Activated CD4-positive, alpha-beta memory T cell treated with anti-CD3 and anti-CD28 coated beads for 36 hours (primary cell): ENCODE measurements at regions of chr5 and their contacts with region 1.

Region 1: GRCh38 chr5:151659001-151659754 is 27.5 kb downstream of the SPARC start:
- DNase-seq: peak; percentile 88
- H3K4me3 Mint-ChIP-seq: no peak overlapping the region
- H3K27ac Mint-ChIP-seq: no peak overlapping the region
- H3K4me1 Mint-ChIP-seq: peaks cover 15% of the 10 kb centered on the region
- H3K27me3 Mint-ChIP-seq: peaks cover 3% of the 10 kb centered on the region

Region 2: DNA sequence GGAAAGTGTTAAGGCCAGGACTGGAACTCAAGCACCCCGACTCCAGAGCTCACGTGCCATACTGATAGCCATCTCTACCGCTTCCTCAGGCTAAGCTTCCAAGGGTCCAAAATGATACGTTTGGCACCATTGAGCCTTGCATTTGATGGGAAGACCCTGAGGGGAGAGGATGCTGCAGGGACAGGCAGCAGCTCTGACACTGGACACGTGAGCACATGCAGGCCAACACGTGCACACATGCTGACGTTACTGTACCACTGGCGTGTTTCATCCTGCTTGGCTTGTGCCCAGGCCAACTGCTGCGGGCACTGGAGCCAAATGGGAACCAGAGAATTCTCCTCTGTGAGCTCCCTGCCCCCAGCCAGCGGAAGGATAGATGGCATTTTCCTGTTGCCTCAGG is 73.2 kb before region 1 on chr5:
- CTCF ChIA-PET with region 1: no interaction called
- POLR2A ChIA-PET with region 1: no interaction called
- intact Hi-C with region 1: no loop called
- DNase-seq: no peak
- H3K4me3 Mint-ChIP-seq: no peak overlapping the region
- H3K27ac Mint-ChIP-seq: no peak overlapping the region
- H3K4me1 Mint-ChIP-seq: no peaks in the 10 kb centered on the region
- H3K27me3 Mint-ChIP-seq: no peaks in the 10 kb centered on the region

Region 3: DNA sequence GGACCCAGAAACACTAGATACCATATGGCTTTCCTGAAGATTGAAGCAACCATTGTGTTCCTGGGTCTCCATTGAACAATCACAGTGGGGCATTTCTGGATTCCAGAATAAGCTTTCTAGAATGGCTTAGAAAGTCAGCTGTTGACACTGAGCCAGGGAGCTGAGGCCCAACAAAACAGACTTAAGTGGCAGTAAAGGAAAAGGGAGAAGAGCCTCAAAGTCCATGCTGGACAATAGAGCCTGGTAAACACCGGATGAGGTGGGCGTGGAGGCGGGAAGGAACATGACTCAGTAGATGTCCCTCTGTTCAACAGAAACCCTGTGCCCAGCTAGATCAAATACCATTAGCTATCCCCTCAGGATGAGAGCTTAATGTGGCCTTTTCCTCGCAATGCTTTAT is 12.8 kb after region 1 on chr5:
- CTCF ChIA-PET with region 1: interaction called, 18 read pairs
- POLR2A ChIA-PET with region 1: no interaction called
- intact Hi-C with region 1: no loop called
- DNase-seq: no peak
- H3K4me3 Mint-ChIP-seq: no peak overlapping the region
- H3K27ac Mint-ChIP-seq: no peak overlapping the region
- H3K4me1 Mint-ChIP-seq: no peaks in the 10 kb centered on the region
- H3K27me3 Mint-ChIP-seq: peaks cover 2% of the 10 kb centered on the region

Region 4: DNA sequence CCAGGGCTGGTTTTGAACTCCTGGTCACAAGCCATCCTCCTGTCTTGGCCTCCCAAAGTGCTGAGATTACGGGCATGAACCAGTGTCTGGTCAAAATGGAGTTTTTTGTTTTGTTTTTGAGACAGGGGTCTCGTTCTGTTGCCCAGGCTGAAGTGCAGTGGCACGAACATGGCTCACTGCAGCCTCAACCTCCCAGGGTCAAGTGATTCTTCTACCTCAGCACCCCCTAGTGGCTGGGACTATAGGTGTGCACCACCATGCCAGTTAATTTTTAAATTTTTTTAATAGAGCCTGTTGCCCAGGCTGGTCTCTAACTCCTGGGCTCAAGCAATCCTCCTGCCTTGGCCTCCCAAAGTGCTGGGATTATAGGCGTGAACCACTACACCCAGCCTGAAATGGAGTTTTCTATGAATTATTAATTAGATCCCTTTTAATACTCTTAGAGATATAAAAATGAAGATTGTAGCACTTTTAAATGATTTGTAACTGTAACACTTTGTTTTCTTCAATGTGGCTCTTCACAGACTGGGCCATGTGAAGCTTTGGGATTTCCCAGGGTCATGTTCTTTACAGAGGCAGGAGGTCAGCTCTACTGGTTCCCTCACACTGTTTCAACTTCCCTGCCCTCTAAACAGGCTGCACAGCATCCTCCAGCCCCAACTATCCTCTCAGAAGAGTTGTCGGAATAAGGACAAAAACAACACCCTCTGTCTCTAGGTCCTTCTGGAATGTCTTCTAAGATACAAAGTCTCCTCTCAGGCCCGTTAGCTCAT is 60.2 kb after region 1 on chr5:
- CTCF ChIA-PET with region 1: interaction called, 24 read pairs
- POLR2A ChIA-PET with region 1: no interaction called
- intact Hi-C with region 1: loop called (anchors 1 kb)
- DNase-seq: peak; percentile 36
- H3K4me3 Mint-ChIP-seq: no peak overlapping the region
- H3K27ac Mint-ChIP-seq: no peak overlapping the region
- H3K4me1 Mint-ChIP-seq: peaks cover 10% of the 10 kb centered on the region
- H3K27me3 Mint-ChIP-seq: no peaks in the 10 kb centered on the region

Region 5: DNA sequence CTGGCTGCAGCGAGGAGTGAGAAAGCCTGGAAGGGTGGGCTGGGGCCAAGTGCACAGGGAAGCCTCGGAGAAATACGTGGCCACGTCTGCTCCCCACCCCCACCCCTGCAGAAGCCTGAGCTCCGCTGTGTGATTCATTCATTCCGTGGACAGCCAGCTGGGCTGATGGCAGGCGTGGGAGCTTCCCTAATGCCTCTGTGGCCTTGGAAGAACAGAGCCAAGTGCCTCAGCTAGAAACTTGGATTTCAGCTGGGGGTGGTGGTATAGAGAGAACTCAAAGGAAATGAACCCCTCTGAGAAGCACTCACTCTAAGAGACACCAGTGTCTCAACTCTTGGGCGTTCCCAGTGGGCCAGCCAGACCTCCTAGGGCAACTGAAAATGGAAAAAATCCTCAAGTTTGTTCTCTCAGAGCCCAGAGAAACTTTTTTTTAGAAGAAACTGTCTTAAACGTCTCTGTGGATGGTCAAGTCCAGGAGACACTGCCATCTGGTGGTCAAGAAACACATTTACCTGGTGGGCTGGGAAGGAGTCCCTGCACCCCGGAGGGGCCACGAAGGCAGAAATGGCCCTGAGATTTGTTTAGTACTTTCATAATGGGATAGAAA is 81.3 kb after region 1 on chr5:
- CTCF ChIA-PET with region 1: interaction called, 156 read pairs
- POLR2A ChIA-PET with region 1: no interaction called
- intact Hi-C with region 1: loop called (anchors 1 kb)
- DNase-seq: peak; percentile 55
- H3K4me3 Mint-ChIP-seq: no peak overlapping the region
- H3K27ac Mint-ChIP-seq: no peak overlapping the region
- H3K4me1 Mint-ChIP-seq: peaks cover 23% of the 10 kb centered on the region
- H3K27me3 Mint-ChIP-seq: no peaks in the 10 kb centered on the region

Region 6: GRCh38 chr5:151758430-151759241 is 99.5 kb after region 1 on chr5 and contains the start of gene ATOX1:
- CTCF ChIA-PET with region 1: interaction called, 12 read pairs
- POLR2A ChIA-PET with region 1: no interaction called
- intact Hi-C with region 1: loop called (anchors 5 kb)
- DNase-seq: peak; percentile 94
- H3K4me3 Mint-ChIP-seq: peak within 1 kb of the TSS; percentile 77
- H3K27ac Mint-ChIP-seq: peak within 1 kb of the TSS; percentile 69
- H3K4me1 Mint-ChIP-seq: peaks cover 32% of the 10 kb centered on the region
- H3K27me3 Mint-ChIP-seq: no peaks in the 10 kb centered on the region
- total RNA-seq, gene ATOX1: 83.1 to 89.9 TPM

Region 7: DNA sequence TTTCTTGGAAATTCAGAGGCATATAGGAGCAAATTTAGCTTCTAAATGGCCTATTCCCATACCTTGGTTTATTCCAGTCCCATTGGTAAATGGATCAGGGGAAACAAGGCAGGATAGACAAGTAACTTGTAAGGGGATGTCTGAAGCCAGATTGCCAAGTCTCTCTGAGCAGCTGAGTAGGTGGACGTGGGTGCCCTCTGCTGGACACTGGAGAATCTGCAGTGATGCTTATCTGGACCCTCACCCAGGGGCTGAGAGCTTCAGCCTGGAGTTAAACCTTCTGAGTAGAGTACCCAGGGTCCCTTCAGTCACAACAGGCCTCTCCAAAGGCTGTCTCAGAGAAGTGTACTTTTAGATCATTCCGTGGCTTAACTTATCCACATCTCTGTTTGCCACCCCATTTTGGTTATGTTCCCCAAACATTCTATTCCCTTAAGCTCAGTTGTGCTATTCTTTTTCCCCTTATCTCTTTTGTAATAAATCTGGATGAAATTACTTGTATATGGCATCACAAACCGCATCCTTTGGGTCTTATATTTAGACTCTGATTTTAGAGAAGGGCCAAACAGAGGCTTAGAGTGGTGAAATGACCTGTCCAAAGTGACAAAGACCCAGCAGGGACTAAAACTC is 483.8 kb after region 1 on chr5:
- CTCF ChIA-PET with region 1: interaction called, 13 read pairs
- POLR2A ChIA-PET with region 1: no interaction called
- intact Hi-C with region 1: loop called (anchors 5 kb)
- DNase-seq: peak; percentile 73
- H3K4me3 Mint-ChIP-seq: no peak overlapping the region
- H3K27ac Mint-ChIP-seq: no peak overlapping the region
- H3K4me1 Mint-ChIP-seq: no peaks in the 10 kb centered on the region
- H3K27me3 Mint-ChIP-seq: no peaks in the 10 kb centered on the region

Region 8: GRCh38 chr5:152505442-152506042 is 846.4 kb after region 1 on chr5:
- CTCF ChIA-PET with region 1: interaction called, 4 read pairs
- POLR2A ChIA-PET with region 1: no interaction called
- intact Hi-C with region 1: loop called (anchors 5 kb)
- DNase-seq: peak; percentile 56
- H3K4me3 Mint-ChIP-seq: no peak overlapping the region
- H3K27ac Mint-ChIP-seq: no peak overlapping the region
- H3K4me1 Mint-ChIP-seq: peaks cover 4% of the 10 kb centered on the region
- H3K27me3 Mint-ChIP-seq: peaks cover 12% of the 10 kb centered on the region